ENCODE measurements at regions of chr19 and their contacts with region 1.

Region 1: GRCh38 chr19:3544742-3545668 is 6.0 kb downstream of the TEKTIP1 start:
- DNase-seq: peak; percentile 75 to 82
- H3K4me3 ChIP-seq: no peak overlapping the region
- H3K27ac ChIP-seq: no peak overlapping the region
- H3K4me1 ChIP-seq: peaks cover 8 to 36% (median 21%) of the 10 kb centered on the region in 4 donors
- H3K27me3 ChIP-seq: no peaks in the 10 kb centered on the region
- CTCF ChIP-seq: peak in 6 of 7 experiments; percentile 74 to 96 (median 94)
- EP300 ChIP-seq: no peak
- POLR2A ChIP-seq: no peak

Region 2: GRCh38 chr19:3618144-3618810 is 73.3 kb after region 1 on chr19:
- intact Hi-C with region 1: loop called (anchors 10 kb)
- DNase-seq: peak; percentile 73 to 75
- H3K4me3 ChIP-seq: peak overlapping the region in 2 of 4 donors; percentile 6 to 35
- H3K27ac ChIP-seq: peak overlapping the region in 2 of 5 donors; percentile 42 to 51
- H3K4me1 ChIP-seq: peaks cover 3 to 27% (median 20%) of the 10 kb centered on the region in 4 donors
- H3K27me3 ChIP-seq: no peaks in the 10 kb centered on the region
- CTCF ChIP-seq: peak in 5 of 7 experiments; percentile 85 to 93 (median 87)
- EP300 ChIP-seq: no peak
- POLR2A ChIP-seq: no peak

Measured in stomach (tissue), 19 donors.